Stomach (tissue), 19 donors: ENCODE measurements at regions of chr19 and their contacts with region 1.

Region 1: DNA sequence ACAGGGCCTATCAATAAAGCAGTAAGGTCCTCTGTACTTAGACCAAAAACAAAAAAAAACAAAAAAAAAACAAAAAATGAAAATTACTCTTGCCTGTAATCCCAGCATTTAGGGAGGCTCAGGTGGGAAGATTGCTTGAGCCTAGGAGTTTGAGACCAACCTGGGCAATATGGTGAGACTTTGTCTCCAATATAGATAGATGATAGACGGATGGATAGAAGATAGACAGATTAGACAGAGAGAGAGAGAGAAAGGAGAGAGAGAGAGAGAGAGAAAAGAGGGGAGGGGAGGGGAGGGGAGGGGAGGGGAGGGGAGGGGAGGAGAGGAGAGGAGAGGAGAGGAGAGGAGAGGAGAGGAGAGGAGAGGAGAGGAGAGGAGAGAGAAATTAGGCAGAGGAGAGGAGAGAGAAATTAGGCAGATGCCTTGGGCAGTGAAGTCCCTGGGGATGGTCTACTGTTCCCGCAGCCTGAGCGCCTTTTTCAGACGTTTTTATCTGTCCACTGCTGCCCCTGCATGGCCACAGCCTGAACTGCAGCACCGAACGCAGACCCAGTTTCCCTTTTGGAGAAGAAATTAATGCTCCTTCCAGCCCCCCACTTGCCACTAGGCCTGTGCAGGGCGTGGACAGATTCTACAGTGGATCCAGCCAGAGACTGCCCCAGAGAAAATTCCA is 9.8 kb upstream of the ZNF627 start:
- DNase-seq: peak; percentile 82 to 87
- H3K4me3 ChIP-seq: no peak overlapping the region
- H3K27ac ChIP-seq: peak overlapping the region in 1 of 5 donors; percentile 39
- H3K4me1 ChIP-seq: peaks cover 0 to 12% (median 10%) of the 10 kb centered on the region in 4 donors
- H3K27me3 ChIP-seq: no peaks in the 10 kb centered on the region
- CTCF ChIP-seq: peak in 5 of 7 experiments; percentile 74 to 94 (median 90)
- EP300 ChIP-seq: no peak
- POLR2A ChIP-seq: no peak

Region 2: GRCh38 chr19:11496391-11497163 is 90.9 kb before region 1 on chr19:
- intact Hi-C with region 1: loop called (anchors 10 kb)
- DNase-seq: peak; percentile 76 to 79
- H3K4me3 ChIP-seq: no peak overlapping the region
- H3K27ac ChIP-seq: no peak overlapping the region
- H3K4me1 ChIP-seq: no peaks in the 10 kb centered on the region
- H3K27me3 ChIP-seq: no peaks in the 10 kb centered on the region
- CTCF ChIP-seq: peak in 5 of 7 experiments; percentile 33 to 67 (median 47)
- EP300 ChIP-seq: no peak
- POLR2A ChIP-seq: no peak

Region 3: DNA sequence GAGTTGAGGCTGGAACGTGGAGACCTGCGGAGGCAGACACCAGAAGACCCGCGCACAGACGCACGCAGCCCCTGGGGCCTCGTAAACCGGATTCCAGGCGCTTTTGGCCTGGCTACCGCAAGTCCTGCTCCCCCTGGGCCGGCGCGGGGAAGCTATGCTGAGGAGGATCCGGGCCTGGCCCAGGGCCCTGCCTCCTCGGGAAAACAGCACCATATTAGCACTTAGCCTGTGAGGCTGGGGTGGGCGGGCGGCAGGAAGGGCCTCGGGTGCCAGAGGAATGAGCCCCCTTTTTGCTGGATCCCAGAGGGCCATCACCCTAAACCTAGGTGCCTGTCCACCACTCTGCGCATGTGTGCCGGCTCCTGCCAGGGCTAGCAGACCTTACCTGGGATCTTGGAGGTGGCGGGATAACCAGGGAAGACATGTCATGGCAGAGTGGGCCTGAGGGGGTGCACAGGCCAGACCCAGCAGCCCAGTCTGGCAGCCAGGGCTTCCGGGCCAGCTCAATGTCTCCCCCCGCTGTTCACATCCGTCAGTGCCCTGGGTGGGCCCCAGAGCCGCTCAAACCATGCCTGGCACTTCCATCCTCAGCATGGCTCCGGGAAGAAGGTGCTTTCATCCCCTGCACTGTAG is 35.7 kb before region 1 on chr19:
- intact Hi-C with region 1: no loop called
- DNase-seq: peak in 1 of 2 donors; percentile 48
- H3K4me3 ChIP-seq: no peak overlapping the region
- H3K27ac ChIP-seq: peak overlapping the region in 4 of 5 donors; percentile 50 to 85 (median 76)
- H3K4me1 ChIP-seq: peaks cover 0 to 19% (median 9%) of the 10 kb centered on the region in 4 donors
- H3K27me3 ChIP-seq: no peaks in the 10 kb centered on the region
- CTCF ChIP-seq: no peak
- EP300 ChIP-seq: no peak
- POLR2A ChIP-seq: no peak